ENCODE measurements at regions of chr14 and their contacts with region 1.

Region 1: DNA sequence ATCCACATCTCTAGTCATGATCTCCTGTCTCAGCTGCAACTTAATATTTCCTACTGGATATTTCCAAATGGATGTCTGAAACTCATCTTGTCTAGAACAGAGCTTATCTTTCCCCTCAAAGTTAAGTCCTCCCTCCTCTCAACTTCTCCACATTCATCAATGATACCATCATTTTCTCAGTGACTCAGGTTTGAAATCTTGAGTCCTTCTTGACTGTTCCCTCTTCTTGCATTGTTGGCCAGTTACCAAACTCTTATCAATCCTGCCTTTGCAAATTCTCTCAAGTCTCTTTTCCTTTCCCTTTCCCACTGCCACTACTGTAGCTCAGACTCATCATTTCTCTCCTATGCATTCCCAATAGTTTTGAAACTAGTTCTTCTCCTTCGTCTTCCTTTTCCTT is 14.3 kb upstream of the CHURC1 start:
- DNase-seq: no peak
- ATAC-seq: no peak
- H3K4me3 ChIP-seq: no peak overlapping the region
- H3K27ac ChIP-seq: no peak overlapping the region
- H3K4me1 ChIP-seq: no peaks in the 10 kb centered on the region
- H3K27me3 ChIP-seq: peaks cover 9% of the 10 kb centered on the region
- CTCF ChIP-seq: no peak

Region 2: DNA sequence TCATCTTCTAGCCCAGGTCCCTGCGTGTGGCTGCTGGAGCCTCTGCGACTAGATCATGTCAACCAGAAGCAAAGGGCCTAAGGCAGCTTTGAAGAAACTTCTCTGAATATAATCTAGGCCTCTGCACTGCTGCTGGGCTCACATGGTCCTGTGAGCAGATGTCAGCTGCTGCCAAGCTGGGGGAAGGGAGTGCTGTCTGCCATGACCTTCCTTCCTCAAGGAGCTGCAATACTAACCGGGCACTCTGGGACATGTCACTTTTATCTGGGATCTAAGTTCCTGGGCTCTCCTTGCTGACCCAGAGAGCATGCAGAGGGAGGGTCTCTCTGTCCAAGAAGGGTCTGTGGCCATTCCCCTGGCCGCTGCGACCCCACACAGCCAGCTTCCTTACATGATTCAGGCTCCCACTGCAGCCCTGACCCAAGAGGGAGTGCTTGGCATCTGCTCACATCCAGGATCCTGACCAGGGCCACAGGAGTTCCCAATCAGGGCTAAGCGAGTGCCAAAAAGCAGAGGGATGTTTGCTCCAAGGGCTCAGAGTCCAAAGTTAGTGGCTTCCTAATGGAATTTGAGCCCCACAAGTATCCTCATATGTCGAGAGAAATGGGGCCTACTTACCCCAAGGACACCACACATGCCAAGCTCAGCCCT is 121.7 kb before region 1 on chr14:
- CTCF ChIA-PET with region 1: no interaction called
- POLR2A ChIA-PET with region 1: no interaction called
- in situ Hi-C with region 1: no loop called
- intact Hi-C with region 1: no loop called
- DNase-seq: no peak
- ATAC-seq: no peak
- H3K4me3 ChIP-seq: no peak overlapping the region
- H3K27ac ChIP-seq: no peak overlapping the region
- H3K4me1 ChIP-seq: no peaks in the 10 kb centered on the region
- H3K27me3 ChIP-seq: no peaks in the 10 kb centered on the region
- CTCF ChIP-seq: no peak

Region 3: GRCh38 chr14:64838662-64839061 is 61.3 kb before region 1 on chr14:
- CTCF ChIA-PET with region 1: no interaction called
- POLR2A ChIA-PET with region 1: interaction called, 18 read pairs
- in situ Hi-C with region 1: no loop called
- intact Hi-C with region 1: no loop called
- DNase-seq: no peak
- ATAC-seq: no peak
- H3K4me3 ChIP-seq: no peak overlapping the region
- H3K27ac ChIP-seq: no peak overlapping the region
- H3K4me1 ChIP-seq: peaks cover 3% of the 10 kb centered on the region; the same call in 1 of the 2 replicates
- H3K27me3 ChIP-seq: peaks cover 4% of the 10 kb centered on the region
- CTCF ChIP-seq: no peak

Region 4: GRCh38 chr14:64986578-64987571 is 86.9 kb after region 1 on chr14 and contains the start of gene FNTB:
- CTCF ChIA-PET with region 1: no interaction called
- POLR2A ChIA-PET with region 1: no interaction called
- in situ Hi-C with region 1: no loop called
- intact Hi-C with region 1: no loop called
- DNase-seq: peak; percentile 92
- ATAC-seq: peak; percentile 100
- H3K4me3 ChIP-seq: peak within 1 kb of the TSS; percentile 84 to 88
- H3K27ac ChIP-seq: peak within 1 kb of the TSS; percentile 89
- H3K4me1 ChIP-seq: peaks cover 7% of the 10 kb centered on the region
- H3K27me3 ChIP-seq: peaks cover 2% of the 10 kb centered on the region; the same call in 1 of the 2 replicates
- CTCF ChIP-seq: peak; percentile 86
- total RNA-seq, gene FNTB: 13.3 TPM